G401 (cell line): ENCODE measurements at regions of chr7 and their contacts with region 1.

Region 1: GRCh38 chr7:668139-668931 is 58.2 kb upstream of the DNAAF5 start:
- DNase-seq: no peak

Region 2: GRCh38 chr7:332646-333392 is 335.5 kb before region 1 on chr7:
- in situ Hi-C with region 1: loop called (anchors 10 kb)
- DNase-seq: peak; percentile 56

Region 3: GRCh38 chr7:584122-584465 is 84.2 kb before region 1 on chr7:
- in situ Hi-C with region 1: no loop called
- DNase-seq: no peak

Region 4: GRCh38 chr7:604884-605531 is 63.3 kb before region 1 on chr7:
- in situ Hi-C with region 1: loop called (anchors 5 kb)
- DNase-seq: no peak

Region 5: DNA sequence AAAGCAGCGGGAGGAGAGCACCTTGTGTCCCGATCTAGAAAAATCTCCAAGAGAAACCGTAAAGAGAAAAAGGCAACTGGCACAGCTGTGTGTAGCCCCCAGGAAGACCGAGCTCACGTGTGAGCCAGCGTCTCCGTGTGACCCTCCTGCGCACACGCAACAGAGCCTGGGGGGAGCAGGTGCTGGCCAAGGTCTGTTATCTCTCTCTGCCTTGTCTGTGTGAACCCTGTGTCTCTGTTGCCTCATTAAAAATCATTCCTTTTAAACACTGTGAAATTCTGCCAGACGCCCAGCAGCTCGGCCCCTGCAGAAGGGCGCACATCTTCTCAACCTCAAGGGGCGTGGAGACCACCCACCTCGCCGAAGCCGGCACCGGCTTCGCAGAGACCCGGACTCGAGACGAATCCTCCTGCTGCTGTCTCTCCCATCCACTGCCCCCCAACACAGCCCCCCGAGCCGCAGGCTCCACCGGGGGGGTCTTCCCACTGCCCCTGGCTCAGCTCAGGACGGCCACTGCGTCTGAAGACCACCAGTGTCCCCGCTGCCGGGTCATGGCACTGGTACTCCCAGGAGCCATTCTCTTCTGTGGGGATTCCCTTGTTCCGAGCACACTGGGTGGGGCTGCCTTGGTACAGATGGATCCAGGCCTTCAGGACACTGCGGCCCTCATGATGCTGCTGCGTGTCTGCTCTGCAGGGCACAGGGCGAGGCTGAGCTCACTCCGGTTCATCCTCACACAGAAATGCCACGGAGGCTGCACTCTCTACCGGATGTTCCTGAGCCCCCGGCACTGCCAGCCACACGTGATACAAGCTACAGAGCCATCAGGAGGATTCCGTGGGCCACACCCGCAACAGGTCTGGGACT is 36.1 kb before region 1 on chr7:
- in situ Hi-C with region 1: no loop called
- DNase-seq: no peak

Region 6: GRCh38 chr7:738755-739454 is 70.6 kb after region 1 on chr7:
- in situ Hi-C with region 1: no loop called
- DNase-seq: peak; percentile 90